ENCODE measurements at regions of chr3 and their contacts with region 1.

Region 1: GRCh38 chr3:196502775-196503195 is 783 bp downstream of the RNF168 start:
- DNase-seq: peak in 8 of 9 experiments; percentile 42 to 86 (median 68)
- ATAC-seq: peak; percentile 60
- H3K4me3 ChIP-seq: peak overlapping the region; percentile 65 to 76
- H3K4me3 Mint-ChIP-seq: peak overlapping the region; percentile 96
- H3K27ac ChIP-seq: peak overlapping the region; percentile 78 to 81
- H3K27ac Mint-ChIP-seq: peak overlapping the region; percentile 95
- H3K4me1 ChIP-seq: peaks cover 13% of the 10 kb centered on the region
- H3K4me1 Mint-ChIP-seq: peaks cover 34% of the 10 kb centered on the region
- H3K27me3 ChIP-seq: no peaks in the 10 kb centered on the region
- H3K27me3 Mint-ChIP-seq: no peaks in the 10 kb centered on the region
- CTCF ChIP-seq: no peak

Region 2: DNA sequence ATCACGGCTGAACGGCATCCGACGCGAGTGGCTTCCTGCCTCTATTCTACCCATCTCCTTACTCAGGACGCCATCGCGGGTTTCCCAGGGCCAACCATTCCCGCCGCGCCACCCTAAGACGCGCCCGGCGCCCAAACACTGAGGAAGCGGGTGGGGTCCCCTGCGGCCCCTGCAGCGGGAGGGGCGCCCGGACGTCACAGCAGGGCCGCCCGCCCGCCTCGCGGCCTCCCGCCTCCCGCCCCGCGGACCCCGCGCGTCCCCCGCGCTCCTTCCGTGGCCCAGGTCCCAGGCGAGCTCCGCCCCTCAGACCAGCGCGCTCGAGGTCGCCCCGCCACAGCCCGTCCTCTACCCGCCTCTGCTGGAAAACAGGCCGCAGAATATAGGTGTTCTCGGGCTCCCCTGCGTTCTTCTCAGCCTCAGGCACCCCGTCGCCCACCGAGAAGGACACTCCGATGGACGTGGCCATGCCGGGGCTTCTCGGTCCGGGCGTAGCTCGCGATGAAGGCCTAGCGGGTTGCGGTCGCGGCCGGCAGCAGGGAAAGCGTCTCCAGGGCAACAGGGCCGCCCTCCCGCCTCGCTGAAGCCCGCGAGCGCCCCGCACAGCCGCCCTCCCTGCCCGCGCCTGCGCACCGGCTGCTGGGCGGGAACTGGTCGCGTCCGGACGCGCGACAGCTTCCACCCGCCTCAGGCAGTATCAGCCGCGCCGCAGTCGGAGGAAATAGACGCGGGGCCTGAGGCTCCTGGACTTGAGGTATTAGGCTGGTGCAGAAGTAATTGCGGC is 184.9 kb before region 1 on chr3 and contains the start of gene DYNLT2B:
- CTCF ChIA-PET with region 1: no interaction called
- POLR2A ChIA-PET with region 1: interaction called, 7 read pairs
- intact Hi-C with region 1: loop called in 1 of 2 experiments (anchors 2 kb)
- DNase-seq: peak; percentile 73 to 95 (median 84)
- ATAC-seq: peak; percentile 90
- H3K4me3 ChIP-seq: peak within 1 kb of the TSS; percentile 79 to 81
- H3K4me3 Mint-ChIP-seq: peak within 1 kb of the TSS; percentile 92
- H3K27ac ChIP-seq: peak within 1 kb of the TSS; percentile 87 to 89
- H3K27ac Mint-ChIP-seq: peak within 1 kb of the TSS; percentile 96
- H3K4me1 ChIP-seq: no peaks in the 10 kb centered on the region
- H3K4me1 Mint-ChIP-seq: peaks cover 15% of the 10 kb centered on the region
- H3K27me3 ChIP-seq: no peaks in the 10 kb centered on the region
- H3K27me3 Mint-ChIP-seq: no peaks in the 10 kb centered on the region
- CTCF ChIP-seq: no peak
- total RNA-seq, gene DYNLT2B: 1.1 to 3.0 TPM

Region 3: DNA sequence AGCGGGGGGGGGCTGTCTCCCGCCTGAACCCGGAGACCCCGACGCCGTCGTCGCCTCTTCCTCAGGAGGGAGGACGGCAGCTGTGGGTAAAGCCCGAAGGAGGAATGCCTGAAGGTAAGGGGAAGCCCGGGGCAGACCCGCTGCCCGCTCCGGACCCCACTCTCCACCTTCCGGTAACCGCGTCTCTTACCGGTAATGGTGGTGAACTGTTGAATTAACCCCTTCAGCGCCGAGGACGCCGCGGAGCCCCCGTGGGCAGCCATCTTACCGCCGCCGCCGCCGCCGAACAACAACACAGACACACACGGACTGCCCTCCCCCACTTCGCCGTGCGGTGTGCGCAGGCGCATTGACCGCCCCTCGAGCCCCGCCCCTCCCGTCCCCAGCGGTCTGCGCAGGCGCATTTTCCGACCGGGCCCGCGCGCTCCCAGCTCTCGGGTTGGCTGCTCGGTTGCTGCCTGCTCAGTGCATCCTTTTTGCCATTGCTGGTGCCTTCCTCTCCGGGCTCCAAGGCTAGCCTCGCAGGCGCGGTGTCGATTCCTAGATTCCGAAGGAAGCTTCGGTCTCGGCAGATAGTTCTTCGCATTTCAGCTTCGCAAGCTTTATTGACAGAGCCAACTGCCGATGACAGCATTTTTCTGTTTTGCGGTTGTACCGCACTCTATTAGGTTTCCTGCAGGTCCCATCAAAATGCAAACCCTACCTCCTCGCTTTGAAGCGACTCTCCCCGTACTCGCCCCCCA is 70.5 kb before region 1 on chr3 and contains the start of gene UBXN7:
- CTCF ChIA-PET with region 1: no interaction called
- POLR2A ChIA-PET with region 1: interaction called, 5 read pairs
- intact Hi-C with region 1: loop called (anchors 1 to 2 kb)
- DNase-seq: peak; percentile 94 to 99 (median 97)
- ATAC-seq: peak; percentile 86
- H3K4me3 ChIP-seq: peak within 1 kb of the TSS; percentile 60 to 77
- H3K4me3 Mint-ChIP-seq: peak within 1 kb of the TSS; percentile 76
- H3K27ac ChIP-seq: peak within 1 kb of the TSS; percentile 80 to 85
- H3K27ac Mint-ChIP-seq: peak within 1 kb of the TSS; percentile 97
- H3K4me1 ChIP-seq: peaks cover 13% of the 10 kb centered on the region
- H3K4me1 Mint-ChIP-seq: peaks cover 29% of the 10 kb centered on the region
- H3K27me3 ChIP-seq: no peaks in the 10 kb centered on the region
- H3K27me3 Mint-ChIP-seq: no peaks in the 10 kb centered on the region
- CTCF ChIP-seq: no peak
- total RNA-seq, gene UBXN7: 72.5 to 80.1 TPM

Region 4: DNA sequence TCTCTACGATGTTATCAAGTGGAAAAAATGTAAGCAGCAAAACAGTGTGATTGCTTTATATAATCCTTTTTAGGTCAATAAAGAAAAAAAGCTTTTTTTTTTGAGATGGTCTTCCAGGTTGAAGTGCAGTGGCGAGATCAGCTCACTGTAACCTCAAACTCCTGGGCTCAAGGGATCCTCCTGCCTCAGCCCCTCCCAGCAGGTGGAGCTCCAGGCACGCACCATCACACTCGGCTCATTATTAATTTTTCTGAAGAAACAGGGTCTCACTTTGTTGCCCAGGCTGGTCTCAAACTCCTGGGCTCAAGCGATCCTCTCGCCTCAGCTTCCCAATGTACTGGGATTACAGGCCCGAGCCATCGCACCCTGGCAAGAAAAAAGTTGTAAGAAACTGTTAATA is 16.5 kb before region 1 on chr3:
- CTCF ChIA-PET with region 1: interaction called, 8 read pairs
- POLR2A ChIA-PET with region 1: no interaction called
- intact Hi-C with region 1: loop called in 1 of 2 experiments (anchors 1 kb)
- DNase-seq: peak in 6 of 9 experiments; percentile 3 to 52 (median 32)
- ATAC-seq: peak; percentile 51
- H3K4me3 ChIP-seq: no peak overlapping the region
- H3K4me3 Mint-ChIP-seq: no peak overlapping the region
- H3K27ac ChIP-seq: no peak overlapping the region
- H3K27ac Mint-ChIP-seq: peak overlapping the region; percentile 32
- H3K4me1 ChIP-seq: no peaks in the 10 kb centered on the region
- H3K4me1 Mint-ChIP-seq: peaks cover 17% of the 10 kb centered on the region
- H3K27me3 ChIP-seq: no peaks in the 10 kb centered on the region
- H3K27me3 Mint-ChIP-seq: no peaks in the 10 kb centered on the region
- CTCF ChIP-seq: peak; percentile 40

Region 5: DNA sequence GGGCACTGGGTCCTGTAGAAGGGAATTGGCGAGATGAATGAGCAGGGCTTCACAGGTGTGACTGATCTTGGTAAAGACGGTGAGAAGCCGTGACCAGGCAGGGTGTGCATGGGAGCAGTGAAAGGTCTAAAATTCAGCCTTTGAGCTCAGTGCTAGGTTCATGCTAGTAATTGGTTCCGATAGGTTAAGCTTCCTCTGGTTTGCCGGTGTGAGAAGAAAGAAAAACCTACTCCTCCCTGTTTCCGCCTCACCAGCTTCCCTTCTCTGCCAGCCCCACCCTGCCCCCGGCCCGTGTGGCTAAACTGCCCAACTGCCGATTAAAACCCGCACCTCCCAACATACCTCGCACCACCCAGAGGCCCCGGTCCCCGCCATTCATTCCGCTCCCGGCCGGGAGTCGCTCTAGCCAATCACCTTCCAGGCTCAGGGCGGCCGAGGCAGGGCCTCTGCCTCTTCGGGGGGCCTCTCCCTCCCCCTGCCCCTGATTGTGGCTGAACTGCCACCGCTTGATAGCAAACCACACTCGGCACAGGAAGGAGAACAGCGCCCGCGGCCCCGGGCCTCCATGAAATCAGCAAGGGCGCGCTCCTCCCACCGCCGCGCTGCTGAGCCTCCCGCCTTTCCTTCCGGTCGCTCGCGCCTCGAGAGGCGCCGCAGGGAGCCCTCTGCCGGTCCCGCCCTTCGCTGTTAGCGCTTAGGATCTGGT is 129.4 kb after region 1 on chr3:
- CTCF ChIA-PET with region 1: no interaction called
- POLR2A ChIA-PET with region 1: no interaction called
- intact Hi-C with region 1: loop called in 1 of 2 experiments (anchors 2 kb)
- DNase-seq: peak; percentile 70 to 96 (median 89)
- ATAC-seq: peak; percentile 79
- H3K4me3 ChIP-seq: peak overlapping the region; percentile 46 to 50
- H3K4me3 Mint-ChIP-seq: peak overlapping the region; percentile 80
- H3K27ac ChIP-seq: peak overlapping the region; percentile 56 to 80
- H3K27ac Mint-ChIP-seq: peak overlapping the region; percentile 93
- H3K4me1 ChIP-seq: peaks cover 36% of the 10 kb centered on the region
- H3K4me1 Mint-ChIP-seq: peaks cover 51% of the 10 kb centered on the region
- H3K27me3 ChIP-seq: no peaks in the 10 kb centered on the region
- H3K27me3 Mint-ChIP-seq: no peaks in the 10 kb centered on the region
- CTCF ChIP-seq: no peak

Region 6: DNA sequence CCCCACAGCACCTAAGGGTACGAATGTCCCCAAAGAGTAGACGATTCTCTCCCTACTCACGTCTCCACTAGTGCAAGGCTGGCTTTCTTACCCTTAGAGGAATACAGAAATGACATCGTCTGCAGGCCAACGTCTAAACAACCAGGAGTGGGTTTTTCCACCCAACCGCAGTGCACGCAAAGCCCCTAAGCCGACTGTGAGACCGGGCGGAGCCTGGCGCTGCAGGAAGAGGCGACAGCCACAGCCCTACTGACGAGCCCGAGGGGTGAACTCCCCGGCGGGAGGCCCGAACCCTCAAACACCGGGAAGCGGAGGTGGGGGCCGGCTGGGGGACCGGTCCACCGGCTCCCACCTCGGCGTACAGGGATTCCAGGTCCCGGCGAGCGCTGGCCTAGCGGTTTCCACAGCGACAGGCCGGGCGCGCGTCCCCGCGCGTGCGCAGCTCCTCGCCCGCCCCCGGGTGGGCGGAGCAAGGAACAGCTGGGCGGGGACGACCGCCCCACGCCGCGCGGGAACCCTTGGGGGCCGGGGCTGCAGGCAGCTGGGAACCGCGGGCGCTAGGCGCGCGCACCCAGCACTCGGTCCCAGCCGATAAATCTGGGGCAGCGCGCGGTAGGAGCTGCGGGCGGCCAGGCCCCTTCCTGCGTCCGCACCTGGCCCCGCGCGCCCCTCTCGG is 209.2 kb after region 1 on chr3 and contains the starts of genes CEP19 and PIGX:
- CTCF ChIA-PET with region 1: no interaction called
- POLR2A ChIA-PET with region 1: no interaction called
- intact Hi-C with region 1: loop called in 1 of 2 experiments (anchors 10 kb)
- DNase-seq: peak; percentile 77 to 99 (median 91)
- ATAC-seq: peak; percentile 83
- H3K4me3 ChIP-seq: peak within 1 kb of the TSS; percentile 72 to 93
- H3K4me3 Mint-ChIP-seq: peak within 1 kb of the TSS; percentile 88
- H3K27ac ChIP-seq: peak within 1 kb of the TSS; percentile 90 to 98
- H3K27ac Mint-ChIP-seq: peak within 1 kb of the TSS; percentile 98
- H3K4me1 ChIP-seq: peaks cover 17% of the 10 kb centered on the region
- H3K4me1 Mint-ChIP-seq: peaks cover 31% of the 10 kb centered on the region
- H3K27me3 ChIP-seq: no peaks in the 10 kb centered on the region
- H3K27me3 Mint-ChIP-seq: no peaks in the 10 kb centered on the region
- CTCF ChIP-seq: no peak
- total RNA-seq, gene CEP19: 0.39 to 0.41 TPM
- total RNA-seq, gene PIGX: 12.0 to 12.2 TPM

Region 7: DNA sequence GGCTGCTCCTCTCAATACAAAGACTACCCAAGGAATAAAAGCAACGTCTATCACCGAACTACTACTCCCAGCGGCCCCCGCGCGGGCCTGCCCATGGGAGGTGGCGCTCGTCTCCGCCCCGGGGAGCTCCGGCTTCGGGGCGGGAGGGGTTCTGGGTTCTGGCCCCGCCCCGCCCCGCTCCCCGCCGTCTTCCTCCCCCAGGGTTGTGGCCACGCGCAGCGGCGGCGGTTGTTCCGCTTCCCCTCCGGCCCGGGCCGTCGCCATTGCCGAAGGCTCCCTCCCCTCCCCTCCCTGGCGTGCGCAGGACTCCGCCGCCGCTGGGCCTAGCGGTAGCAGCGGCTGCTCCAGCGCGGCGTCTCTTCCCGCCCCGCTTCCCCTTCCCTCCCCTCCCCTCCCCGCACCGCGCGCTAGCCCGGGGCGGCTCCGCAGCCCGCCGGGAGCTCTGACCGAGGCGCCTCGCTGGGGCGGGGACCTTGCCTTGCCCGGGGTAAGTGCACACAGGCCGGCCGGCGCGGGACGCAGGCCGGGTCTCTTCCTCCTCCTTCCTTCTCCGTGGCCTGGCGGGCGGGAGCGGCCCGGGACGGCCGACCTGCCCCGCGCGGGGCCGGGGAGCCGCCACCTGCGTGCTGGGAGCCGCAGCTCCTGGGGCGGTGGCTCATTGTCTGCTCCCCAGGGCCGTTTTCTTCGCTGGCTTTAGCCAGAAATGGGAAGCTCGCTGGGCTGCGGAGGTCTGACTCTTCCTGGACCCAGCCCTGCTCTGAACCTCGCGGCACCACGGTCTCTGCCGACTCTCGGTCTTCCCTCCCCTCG is 237.1 kb after region 1 on chr3 and contains the start of gene PAK2:
- CTCF ChIA-PET with region 1: no interaction called
- POLR2A ChIA-PET with region 1: no interaction called
- intact Hi-C with region 1: loop called in 1 of 2 experiments (anchors 2 kb)
- DNase-seq: peak; percentile 78 to 95 (median 90)
- ATAC-seq: peak; percentile 84
- H3K4me3 ChIP-seq: peak within 1 kb of the TSS; percentile 69 to 77
- H3K4me3 Mint-ChIP-seq: peak within 1 kb of the TSS; percentile 99
- H3K27ac ChIP-seq: peak within 1 kb of the TSS; percentile 82 to 88
- H3K27ac Mint-ChIP-seq: peak within 1 kb of the TSS; percentile 98
- H3K4me1 ChIP-seq: peaks cover 27% of the 10 kb centered on the region
- H3K4me1 Mint-ChIP-seq: peaks cover 33% of the 10 kb centered on the region
- H3K27me3 ChIP-seq: no peaks in the 10 kb centered on the region
- H3K27me3 Mint-ChIP-seq: no peaks in the 10 kb centered on the region
- CTCF ChIP-seq: no peak
- total RNA-seq, gene PAK2: 29.9 to 30.4 TPM